Psoas muscle (tissue), 8 donors: ENCODE measurements at regions of chr2 and their contacts with region 1.

Region 1: GRCh38 chr2:238339395-238340213 is 19.3 kb downstream of the TRAF3IP1 start:
- DNase-seq: no peak
- ATAC-seq: peak; percentile 69 to 79 (median 72)
- H3K4me3 ChIP-seq: no peak overlapping the region
- H3K27ac ChIP-seq: peak overlapping the region; percentile 65
- H3K4me1 ChIP-seq: peaks cover 31% of the 10 kb centered on the region
- H3K27me3 ChIP-seq: no peaks in the 10 kb centered on the region
- CTCF ChIP-seq: peak; percentile 48

Region 2: DNA sequence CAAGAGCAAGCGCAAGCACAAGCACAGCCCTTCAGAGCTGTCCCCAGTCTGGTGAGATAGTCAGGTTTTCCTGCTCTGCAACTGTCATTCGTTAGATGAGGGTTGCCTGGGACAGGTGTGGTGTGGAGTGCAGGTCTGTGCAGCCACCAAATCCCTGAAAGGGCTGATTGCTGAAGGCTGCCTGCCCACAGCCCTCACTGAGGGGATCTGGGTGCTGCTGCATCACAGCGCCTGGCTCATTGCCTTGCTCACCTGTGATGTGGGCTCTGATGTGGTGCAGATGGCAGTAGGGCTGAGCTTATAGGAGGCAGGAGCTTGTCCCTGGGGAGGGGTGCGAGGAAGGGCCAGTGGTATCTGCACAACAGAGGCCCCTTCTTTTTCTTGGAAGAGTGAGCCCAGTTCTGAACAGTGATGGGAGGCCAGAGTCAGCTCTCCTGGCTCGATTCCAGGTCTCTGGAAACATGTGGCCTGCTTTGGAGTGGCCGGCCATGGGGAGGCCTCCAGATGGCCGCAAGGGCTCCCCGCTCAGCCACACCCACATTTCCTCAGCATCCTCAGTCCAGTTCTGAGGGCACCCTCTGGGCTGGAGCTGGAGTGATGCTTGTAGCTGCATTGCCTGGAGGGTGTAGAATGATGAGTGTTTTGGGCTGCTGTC is 361.4 kb before region 1 on chr2:
- intact Hi-C with region 1: no loop called
- DNase-seq: no peak
- ATAC-seq: peak in 2 of 4 donors; percentile 24 to 39
- H3K4me3 ChIP-seq: no peak overlapping the region
- H3K27ac ChIP-seq: no peak overlapping the region
- H3K4me1 ChIP-seq: peaks cover 36% of the 10 kb centered on the region
- H3K27me3 ChIP-seq: no peaks in the 10 kb centered on the region
- CTCF ChIP-seq: no peak

Region 3: DNA sequence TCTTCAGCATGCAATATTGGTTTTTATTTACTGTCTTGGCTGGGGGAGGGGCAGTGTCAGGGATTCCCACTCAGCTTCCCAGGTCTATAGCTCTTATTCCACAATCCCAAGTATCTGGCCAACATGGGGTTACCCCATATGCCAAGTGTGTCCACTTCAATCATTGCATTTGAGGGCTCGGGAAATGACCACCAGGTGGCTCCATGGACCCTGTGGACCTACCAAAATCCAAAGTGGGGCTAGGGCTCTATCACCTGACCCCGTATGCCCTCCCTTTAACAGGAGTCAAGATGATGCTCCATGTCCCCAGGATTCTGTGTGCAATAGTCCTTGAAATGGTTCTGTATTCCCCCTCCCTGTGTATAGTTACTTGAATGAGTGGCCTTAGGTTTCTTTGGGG is 31.4 kb before region 1 on chr2:
- intact Hi-C with region 1: loop called in 1 of 2 experiments (anchors 2 kb)
- DNase-seq: no peak
- ATAC-seq: peak; percentile 64 to 76 (median 73)
- H3K4me3 ChIP-seq: no peak overlapping the region
- H3K27ac ChIP-seq: no peak overlapping the region
- H3K4me1 ChIP-seq: no peaks in the 10 kb centered on the region
- H3K27me3 ChIP-seq: no peaks in the 10 kb centered on the region
- CTCF ChIP-seq: peak; percentile 54

Region 4: GRCh38 chr2:238320246-238320647 is 19.4 kb before region 1 on chr2 and contains the start of gene TRAF3IP1:
- intact Hi-C with region 1: loop called in 1 of 2 experiments (anchors 1 kb)
- DNase-seq: peak; percentile 95 to 97
- ATAC-seq: peak; percentile 95 to 97 (median 96)
- H3K4me3 ChIP-seq: peak within 1 kb of the TSS; percentile 82
- H3K27ac ChIP-seq: peak within 1 kb of the TSS; percentile 86
- H3K4me1 ChIP-seq: peaks cover 33% of the 10 kb centered on the region
- H3K27me3 ChIP-seq: no peaks in the 10 kb centered on the region
- CTCF ChIP-seq: no peak
- total RNA-seq, gene TRAF3IP1: 14.9 to 24.7 (median 18.4) TPM

Region 5: GRCh38 chr2:238985871-238986446 is 646.4 kb after region 1 on chr2:
- intact Hi-C with region 1: no loop called
- DNase-seq: no peak
- ATAC-seq: no peak
- H3K4me3 ChIP-seq: no peak overlapping the region
- H3K27ac ChIP-seq: no peak overlapping the region
- H3K4me1 ChIP-seq: no peaks in the 10 kb centered on the region
- H3K27me3 ChIP-seq: peaks cover 0 to 19% (median 7%) of the 10 kb centered on the region in 3 donors
- CTCF ChIP-seq: no peak